Activated T-helper 1 cell treated with anti-CD3 and anti-CD28 coated beads, Interleukin-12 subunit alpha, Interleukin-12 subunit beta, Interleukin-2, Interleukin-4 antibody, amounts not matched to agents 30 ng/mL and 10 ng/mL and 1 ng/mL, durations not matched to agents 14 hours and 24 hours and 36 hours (primary cell): ENCODE measurements at regions of chr1 and their contacts with region 1.

Region 1: DNA sequence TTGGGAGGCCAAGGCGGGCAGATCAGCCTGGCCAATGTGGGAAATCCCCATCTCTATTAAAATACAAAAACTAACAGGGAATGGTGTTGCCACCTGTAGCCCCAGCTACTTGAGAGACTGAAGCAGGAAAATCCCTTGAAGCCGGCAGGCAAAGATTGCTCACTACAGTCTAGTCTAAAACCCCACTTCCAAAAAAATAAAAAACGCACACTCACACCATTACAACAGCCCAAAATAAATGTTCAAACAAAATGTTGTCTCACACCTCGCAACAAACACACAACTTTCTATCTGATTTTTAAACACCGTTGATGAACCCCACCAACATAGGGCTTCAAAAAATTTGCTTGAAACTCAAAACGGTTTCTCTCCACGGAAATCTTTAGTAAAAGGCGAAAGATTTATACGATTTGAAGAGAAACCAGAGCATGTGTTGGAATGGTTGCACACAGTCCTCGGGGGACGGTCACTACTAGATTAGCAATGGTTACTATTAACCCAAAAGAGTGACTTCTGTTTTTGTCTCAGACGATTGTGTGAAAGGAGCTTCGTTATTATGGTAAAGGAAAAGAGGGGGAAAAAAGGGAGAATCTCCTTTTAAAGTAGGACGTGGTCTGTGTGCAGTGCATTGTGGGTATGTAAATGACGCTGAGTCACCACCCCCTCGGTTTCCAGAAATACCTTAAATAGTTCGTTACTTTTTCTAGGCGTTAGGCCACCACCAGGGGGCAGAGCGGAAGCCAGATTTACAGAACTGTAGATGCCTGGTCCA is at the start of gene RNU5D-1:
- DNase-seq: peak; percentile 87
- H3K4me3 Mint-ChIP-seq: peak within 1 kb of the TSS; percentile 60
- H3K27ac Mint-ChIP-seq: peak within 1 kb of the TSS; percentile 100
- H3K4me1 Mint-ChIP-seq: peaks cover 35% of the 10 kb centered on the region
- H3K27me3 Mint-ChIP-seq: peaks cover 3% of the 10 kb centered on the region
- total RNA-seq, gene RNU5D-1: not detected in 2 replicates

Region 2: GRCh38 chr1:44714944-44715571 is 15.9 kb before region 1 on chr1:
- intact Hi-C with region 1: loop called (anchors 2 kb)
- DNase-seq: peak; percentile 63
- H3K4me3 Mint-ChIP-seq: peak overlapping the region; percentile 52
- H3K27ac Mint-ChIP-seq: peak overlapping the region; percentile 35
- H3K4me1 Mint-ChIP-seq: peaks cover 44% of the 10 kb centered on the region
- H3K27me3 Mint-ChIP-seq: peaks cover 8% of the 10 kb centered on the region

Region 3: GRCh38 chr1:44786138-44786840 is 55.4 kb after region 1 on chr1:
- intact Hi-C with region 1: loop called (anchors 2 kb)
- DNase-seq: peak; percentile 66
- H3K4me3 Mint-ChIP-seq: peak overlapping the region; percentile 80
- H3K27ac Mint-ChIP-seq: peak overlapping the region; percentile 66
- H3K4me1 Mint-ChIP-seq: peaks cover 37% of the 10 kb centered on the region
- H3K27me3 Mint-ChIP-seq: no peaks in the 10 kb centered on the region

Region 4: DNA sequence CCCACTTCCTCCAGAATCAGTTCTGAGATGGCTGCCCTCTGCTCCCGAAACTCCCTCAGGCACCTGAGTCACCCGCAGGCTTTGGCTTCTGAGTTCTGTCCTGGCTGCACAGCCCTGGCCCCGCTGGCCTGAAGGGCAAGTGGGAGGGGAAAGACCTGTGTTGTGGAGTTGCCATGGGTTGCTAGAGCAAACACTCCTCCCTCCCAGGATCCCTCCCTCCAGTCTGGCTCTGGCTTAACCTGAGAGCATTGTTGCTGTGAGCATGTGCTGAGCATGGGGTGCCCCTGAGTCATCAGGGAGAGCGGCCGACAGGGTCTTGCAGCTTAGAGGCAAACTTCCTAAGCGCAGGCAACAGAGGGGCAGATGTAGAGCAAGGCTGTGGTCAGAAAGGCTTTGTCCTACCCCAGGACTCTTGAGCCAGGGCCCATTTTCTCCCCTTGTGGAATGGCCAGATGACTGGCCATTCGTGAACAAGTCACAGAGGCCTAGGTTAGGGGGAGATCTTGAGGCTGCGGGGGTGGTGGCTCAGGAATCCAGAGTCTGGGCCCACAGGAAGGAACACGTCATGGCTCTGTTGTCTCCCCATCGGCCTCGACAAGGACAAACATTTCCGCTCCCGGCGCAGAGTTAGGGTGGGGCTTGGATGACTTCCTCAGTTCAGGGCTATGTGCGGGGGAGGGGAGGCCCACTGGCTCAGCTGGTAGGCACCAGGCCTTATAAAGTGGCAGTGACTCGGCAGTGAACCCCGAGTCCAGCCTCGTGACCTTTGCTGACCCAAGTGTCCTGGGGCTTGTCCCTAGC is 76.5 kb after region 1 on chr1 and contains the start of gene DYNLT4:
- intact Hi-C with region 1: loop called (anchors 1 kb)
- DNase-seq: peak; percentile 84
- H3K4me3 Mint-ChIP-seq: peak within 1 kb of the TSS; percentile 68
- H3K27ac Mint-ChIP-seq: peak within 1 kb of the TSS; percentile 99
- H3K4me1 Mint-ChIP-seq: peaks cover 88% of the 10 kb centered on the region
- H3K27me3 Mint-ChIP-seq: no peaks in the 10 kb centered on the region
- total RNA-seq, gene DYNLT4: 0.44 TPM in 1 of 2 replicates, not detected in the other

Region 5: DNA sequence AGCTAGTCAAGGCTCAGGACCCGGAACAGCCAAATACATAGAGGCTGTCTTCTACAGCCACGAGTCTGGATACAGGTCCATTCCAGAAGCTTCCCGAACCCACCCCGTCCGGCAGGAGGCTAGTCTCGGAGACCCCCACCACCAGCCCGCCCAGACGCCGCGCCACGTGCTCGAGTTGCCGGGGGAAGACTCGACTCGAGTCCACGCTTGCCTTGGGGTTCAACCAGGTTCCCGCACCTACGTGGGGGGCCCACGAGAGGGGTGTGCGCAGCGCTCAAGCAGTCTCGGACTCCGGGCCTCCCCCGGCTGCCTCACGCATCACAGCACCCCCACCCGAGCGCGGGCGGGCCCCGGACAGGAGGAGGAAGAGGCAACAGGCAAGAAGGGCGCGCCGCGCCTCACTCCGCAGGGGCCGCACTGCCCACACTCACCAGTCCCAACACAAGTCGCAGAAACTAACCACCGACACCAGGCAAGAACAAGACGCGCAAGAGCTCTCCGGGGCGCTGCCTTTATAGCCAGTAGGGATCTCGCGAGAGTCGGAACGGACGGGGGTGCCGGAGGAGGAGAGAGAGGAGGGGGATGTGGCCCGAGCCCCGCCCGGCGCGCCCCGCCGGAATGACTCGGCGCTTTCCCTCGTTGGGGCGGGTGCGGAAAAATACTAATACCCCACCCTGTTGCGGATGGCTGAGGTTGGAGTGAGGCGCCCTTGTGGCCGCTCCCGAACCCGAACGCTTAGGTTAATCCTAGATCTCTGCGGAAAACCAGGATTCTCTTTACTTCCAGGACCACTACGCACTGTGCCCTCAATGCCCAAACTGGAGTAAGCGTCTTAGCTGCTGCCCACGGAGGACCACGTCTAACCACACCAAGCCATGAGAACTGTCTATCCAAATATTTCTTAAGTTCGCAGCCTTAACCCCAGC is 790.7 kb after region 1 on chr1 and contains the start of gene PRDX1:
- intact Hi-C with region 1: loop called (anchors 2 kb)
- DNase-seq: peak; percentile 97
- H3K4me3 Mint-ChIP-seq: peak within 1 kb of the TSS; percentile 98
- H3K27ac Mint-ChIP-seq: peak within 1 kb of the TSS; percentile 91
- H3K4me1 Mint-ChIP-seq: peaks cover 44% of the 10 kb centered on the region
- H3K27me3 Mint-ChIP-seq: peaks cover 1% of the 10 kb centered on the region
- total RNA-seq, gene PRDX1: 635 and 655 TPM in 2 replicates